OCI-LY7 (cell line): ENCODE measurements at regions of chr3 and their contacts with region 1.

Region 1: DNA sequence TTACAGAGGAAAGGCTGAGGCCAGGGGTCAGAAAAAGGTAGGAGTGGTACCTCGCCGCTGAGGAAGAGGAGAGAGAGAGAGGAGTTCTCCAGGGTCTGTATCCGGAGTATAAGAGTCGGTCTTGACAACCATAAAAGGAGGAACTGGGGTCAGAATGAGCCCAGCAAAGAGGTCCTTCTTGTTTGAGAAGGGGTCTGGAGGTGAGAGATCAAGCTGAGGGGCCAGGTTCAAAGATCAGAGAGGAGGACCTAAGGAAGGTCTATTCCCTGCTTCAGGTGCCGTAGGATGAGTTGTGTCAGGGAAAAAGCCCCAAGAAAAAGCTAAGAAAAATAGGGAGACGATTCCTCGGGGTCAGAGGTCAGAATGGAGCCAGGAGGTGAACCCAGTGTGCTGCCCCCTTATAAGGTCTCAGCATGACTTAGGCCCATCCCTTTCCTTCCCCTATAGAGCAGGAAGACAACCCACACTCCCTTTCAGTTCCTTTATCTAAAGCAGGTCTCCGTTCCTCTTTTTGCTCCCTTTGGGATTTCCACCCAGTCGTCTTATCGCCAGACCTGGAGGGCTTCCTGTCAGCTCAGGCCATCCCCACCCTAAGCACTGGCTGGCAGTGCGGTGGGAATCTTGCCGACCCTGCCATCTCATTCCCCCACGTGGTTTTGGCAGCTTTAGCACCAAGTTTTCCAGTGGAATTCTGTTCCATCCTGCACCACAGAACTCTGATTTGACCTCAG is 651 bp downstream of the MTMR14 start:
- DNase-seq: peak; percentile 60
- H3K4me3 ChIP-seq: peak overlapping the region; percentile 83
- H3K27ac ChIP-seq: peak overlapping the region; percentile 51
- H3K4me1 ChIP-seq: peaks cover 46% of the 10 kb centered on the region
- CTCF ChIP-seq: no peak

Region 2: DNA sequence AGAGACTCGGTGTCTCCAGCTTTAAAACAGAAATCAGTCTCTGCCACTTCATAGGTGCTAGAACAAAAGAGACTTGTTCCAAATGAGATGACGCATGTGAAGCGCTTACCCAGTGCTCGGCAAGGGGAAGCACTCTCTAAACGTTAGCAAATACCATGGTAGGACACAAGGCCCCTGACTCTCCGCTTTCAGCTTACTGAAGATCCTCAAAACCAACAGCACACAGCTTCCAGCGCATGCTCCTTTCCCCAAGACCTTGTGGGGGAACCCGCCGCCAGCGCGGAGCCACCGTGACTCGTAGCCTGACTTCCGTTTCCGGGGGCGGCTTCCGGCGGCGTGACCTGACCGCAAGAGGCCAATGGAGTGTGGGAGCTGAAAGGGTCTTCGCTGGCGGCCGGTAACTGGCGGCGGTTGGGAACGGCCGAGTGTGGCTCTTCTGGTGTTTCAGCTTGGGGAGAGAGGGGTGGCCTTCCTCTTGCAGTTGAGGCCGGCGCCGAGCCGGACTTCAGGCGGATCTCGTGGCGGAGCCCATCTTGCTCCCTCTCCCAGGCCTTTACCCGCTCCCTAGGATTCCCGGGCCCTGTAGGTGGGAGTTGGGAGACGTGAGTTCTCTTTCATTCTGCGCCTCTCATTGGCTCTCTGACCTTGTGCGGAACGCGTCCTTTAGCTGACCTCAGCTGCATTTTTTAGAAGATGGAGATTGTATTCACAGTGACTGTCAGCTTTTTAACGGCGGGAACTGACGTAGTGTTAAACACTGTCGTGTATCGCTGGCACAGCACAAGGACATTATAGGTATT is 287.0 kb before region 1 on chr3 and contains the start of gene THUMPD3:
- CTCF ChIA-PET with region 1: no interaction called
- POLR2A ChIA-PET with region 1: interaction called, 3 read pairs
- intact Hi-C with region 1: loop called (anchors 5 kb)
- DNase-seq: peak; percentile 90
- H3K4me3 ChIP-seq: peak within 1 kb of the TSS; percentile 77
- H3K27ac ChIP-seq: peak within 1 kb of the TSS; percentile 70
- H3K4me1 ChIP-seq: peaks cover 14% of the 10 kb centered on the region
- CTCF ChIP-seq: no peak
- total RNA-seq, gene THUMPD3: 12.4 and 20.7 TPM in 2 replicates

Region 3: DNA sequence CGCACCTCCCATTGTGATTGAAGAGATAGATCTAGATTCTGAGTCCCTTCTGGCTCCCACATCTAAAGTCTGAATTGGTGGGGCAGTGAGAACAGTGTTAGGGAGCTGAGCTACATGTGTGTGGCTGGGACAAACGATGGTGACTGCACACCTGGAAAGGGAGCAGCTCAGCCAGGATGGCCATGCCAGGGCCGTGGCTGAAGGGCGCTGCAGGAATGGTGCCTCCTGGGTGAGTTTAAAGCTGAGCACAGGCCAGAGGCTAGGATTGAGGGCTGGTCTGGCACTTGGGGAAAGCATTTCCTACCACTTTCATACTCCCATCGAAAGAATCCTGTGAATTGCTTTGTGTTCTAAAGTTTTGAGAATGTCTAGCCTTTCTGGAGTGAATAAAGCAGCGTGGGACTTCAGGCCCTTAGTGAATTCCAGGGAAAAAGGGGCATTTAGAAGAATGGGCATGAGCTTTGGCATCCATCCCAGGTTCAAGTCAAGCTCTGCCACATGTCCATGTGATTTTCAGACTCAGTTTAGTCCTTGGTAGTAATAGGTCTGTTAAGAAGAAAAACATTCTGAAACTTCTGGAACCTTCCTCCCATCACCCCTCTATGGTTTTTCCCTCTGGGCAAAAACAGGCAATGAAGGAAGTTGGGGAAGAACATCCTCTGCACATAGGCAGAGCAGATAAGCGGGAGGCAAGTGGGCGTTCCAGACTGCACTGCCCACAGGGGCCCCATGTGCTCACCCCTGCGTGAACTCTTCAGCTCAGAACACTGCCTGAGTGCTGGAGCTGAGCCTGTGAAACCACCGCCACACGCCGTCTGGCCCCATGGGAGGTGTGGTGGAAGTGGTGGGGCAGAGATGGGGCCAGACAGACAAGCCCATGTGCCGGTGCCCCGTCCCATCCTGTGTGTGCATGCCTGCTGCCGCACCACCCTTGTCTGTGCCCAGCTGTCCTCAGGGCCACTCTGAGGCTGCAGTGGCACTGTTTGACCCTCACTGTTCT is 40.8 kb after region 1 on chr3:
- CTCF ChIA-PET with region 1: no interaction called
- POLR2A ChIA-PET with region 1: no interaction called
- intact Hi-C with region 1: no loop called
- DNase-seq: peak; percentile 51
- H3K4me3 ChIP-seq: no peak overlapping the region
- H3K27ac ChIP-seq: no peak overlapping the region
- H3K4me1 ChIP-seq: peaks cover 22% of the 10 kb centered on the region
- CTCF ChIP-seq: no peak

Region 4: GRCh38 chr3:9731206-9732079 is 81.5 kb after region 1 on chr3 and contains the start of gene BRPF1:
- CTCF ChIA-PET with region 1: no interaction called
- POLR2A ChIA-PET with region 1: interaction called, 5 read pairs
- intact Hi-C with region 1: loop called (anchors 1 kb)
- DNase-seq: peak; percentile 98
- H3K4me3 ChIP-seq: peak within 1 kb of the TSS; percentile 96
- H3K27ac ChIP-seq: peak within 1 kb of the TSS; percentile 60
- H3K4me1 ChIP-seq: peaks cover 28% of the 10 kb centered on the region
- CTCF ChIP-seq: no peak
- total RNA-seq, gene BRPF1: 29.2 and 31.9 TPM in 2 replicates